ENCODE measurements at regions of chr3 and their contacts with region 1.

Region 1: GRCh38 chr3:59783468-59783988 is 733.7 kb upstream of the CFAP20DC start:
- DNase-seq: peak in 3 of 9 experiments; percentile 31 to 66 (median 31)
- ATAC-seq: peak; percentile 52
- H3K4me3 ChIP-seq: no peak overlapping the region
- H3K4me3 Mint-ChIP-seq: no peak overlapping the region
- H3K27ac ChIP-seq: no peak overlapping the region
- H3K27ac Mint-ChIP-seq: peak overlapping the region; percentile 35
- H3K4me1 ChIP-seq: peaks cover 4% of the 10 kb centered on the region
- H3K4me1 Mint-ChIP-seq: peaks cover 14% of the 10 kb centered on the region
- H3K27me3 ChIP-seq: no peaks in the 10 kb centered on the region
- H3K27me3 Mint-ChIP-seq: no peaks in the 10 kb centered on the region
- CTCF ChIP-seq: no peak

Region 2: GRCh38 chr3:58502872-58503271 is 1280.7 kb before region 1 on chr3:
- CTCF ChIA-PET with region 1: no interaction called
- POLR2A ChIA-PET with region 1: no interaction called
- intact Hi-C with region 1: loop called in 1 of 2 experiments (anchors 10 kb)
- DNase-seq: no peak
- ATAC-seq: no peak
- H3K4me3 ChIP-seq: no peak overlapping the region
- H3K4me3 Mint-ChIP-seq: no peak overlapping the region
- H3K27ac ChIP-seq: no peak overlapping the region
- H3K27ac Mint-ChIP-seq: no peak overlapping the region
- H3K4me1 ChIP-seq: no peaks in the 10 kb centered on the region
- H3K4me1 Mint-ChIP-seq: peaks cover 17% of the 10 kb centered on the region
- H3K27me3 ChIP-seq: no peaks in the 10 kb centered on the region
- H3K27me3 Mint-ChIP-seq: no peaks in the 10 kb centered on the region
- CTCF ChIP-seq: no peak

Region 3: GRCh38 chr3:59709702-59710553 is 73.6 kb before region 1 on chr3:
- CTCF ChIA-PET with region 1: no interaction called
- POLR2A ChIA-PET with region 1: no interaction called
- intact Hi-C with region 1: no loop called
- DNase-seq: peak in 5 of 9 experiments; percentile 4 to 52 (median 21)
- ATAC-seq: no peak
- H3K4me3 ChIP-seq: no peak overlapping the region
- H3K4me3 Mint-ChIP-seq: no peak overlapping the region
- H3K27ac ChIP-seq: no peak overlapping the region
- H3K27ac Mint-ChIP-seq: no peak overlapping the region
- H3K4me1 ChIP-seq: peaks cover 16% of the 10 kb centered on the region
- H3K4me1 Mint-ChIP-seq: no peaks in the 10 kb centered on the region
- H3K27me3 ChIP-seq: no peaks in the 10 kb centered on the region
- H3K27me3 Mint-ChIP-seq: no peaks in the 10 kb centered on the region
- CTCF ChIP-seq: no peak

Region 4: GRCh38 chr3:59857589-59858346 is 74.2 kb after region 1 on chr3:
- CTCF ChIA-PET with region 1: no interaction called
- POLR2A ChIA-PET with region 1: no interaction called
- intact Hi-C with region 1: no loop called
- DNase-seq: peak; percentile 50 to 84 (median 77)
- ATAC-seq: peak; percentile 93
- H3K4me3 ChIP-seq: no peak overlapping the region
- H3K4me3 Mint-ChIP-seq: peak overlapping the region; percentile 42
- H3K27ac ChIP-seq: no peak overlapping the region
- H3K27ac Mint-ChIP-seq: no peak overlapping the region
- H3K4me1 ChIP-seq: peaks cover 4% of the 10 kb centered on the region
- H3K4me1 Mint-ChIP-seq: peaks cover 9% of the 10 kb centered on the region
- H3K27me3 ChIP-seq: no peaks in the 10 kb centered on the region
- H3K27me3 Mint-ChIP-seq: no peaks in the 10 kb centered on the region
- CTCF ChIP-seq: peak; percentile 94

Measured in CD8-positive, alpha-beta T cell (primary cell).